ENCODE measurements at regions of chrX and their contacts with region 1.

Region 1: DNA sequence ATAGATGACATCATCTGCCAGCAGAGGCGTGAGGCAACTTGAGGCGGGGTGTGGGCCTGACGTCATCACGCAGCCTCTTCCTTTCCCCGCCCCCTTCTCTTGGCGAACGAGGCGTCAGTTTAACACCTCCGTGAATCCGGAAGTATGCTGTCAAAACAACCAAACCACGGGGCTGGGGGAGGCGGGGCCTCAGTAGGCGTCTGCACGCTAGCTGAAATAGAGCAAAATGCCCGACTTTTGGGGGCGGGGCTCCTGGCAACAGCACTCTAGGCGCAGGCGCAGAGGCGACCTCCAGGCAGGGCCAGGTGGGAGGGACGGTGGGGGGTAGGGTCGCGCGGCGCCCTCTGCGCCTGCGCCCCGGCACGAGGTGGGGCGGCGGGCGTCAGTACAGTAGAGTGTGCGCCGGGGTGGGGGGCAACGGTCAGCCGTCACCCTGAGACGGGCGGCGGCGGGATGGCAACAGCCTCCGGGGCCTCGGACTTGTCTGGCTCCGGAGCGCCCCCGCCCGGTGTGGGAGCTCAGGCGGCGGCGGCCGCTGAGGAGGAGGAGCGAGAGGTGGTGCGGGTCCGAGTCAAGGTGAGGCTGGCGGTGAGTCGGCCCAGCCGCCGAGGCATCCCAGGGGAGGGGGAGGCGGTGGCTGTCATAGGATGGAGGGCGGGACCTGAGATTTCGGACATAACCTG is at the start of gene TBC1D25:
- DNase-seq: peak; percentile 93
- H3K4me3 Mint-ChIP-seq: peak within 1 kb of the TSS; percentile 94
- H3K27ac Mint-ChIP-seq: peak within 1 kb of the TSS; percentile 92
- H3K4me1 Mint-ChIP-seq: peaks cover 17% of the 10 kb centered on the region
- H3K27me3 Mint-ChIP-seq: no peaks in the 10 kb centered on the region
- total RNA-seq, gene TBC1D25: 13.5 and 16.0 TPM in 2 replicates

Region 2: GRCh38 chrX:48574270-48575266 is 35.1 kb after region 1 on chrX and contains the start of gene RBM3:
- intact Hi-C with region 1: loop called (anchors 1 kb)
- DNase-seq: peak; percentile 89
- H3K4me3 Mint-ChIP-seq: peak within 1 kb of the TSS; percentile 99
- H3K27ac Mint-ChIP-seq: peak within 1 kb of the TSS; percentile 100
- H3K4me1 Mint-ChIP-seq: peaks cover 19% of the 10 kb centered on the region
- H3K27me3 Mint-ChIP-seq: no peaks in the 10 kb centered on the region
- total RNA-seq, gene RBM3: 318 and 338 TPM in 2 replicates

Region 3: GRCh38 chrX:48631350-48632090 is 92.0 kb after region 1 on chrX:
- intact Hi-C with region 1: no loop called
- DNase-seq: peak; percentile 69
- H3K4me3 Mint-ChIP-seq: peak overlapping the region; percentile 19
- H3K27ac Mint-ChIP-seq: no peak overlapping the region
- H3K4me1 Mint-ChIP-seq: peaks cover 3% of the 10 kb centered on the region
- H3K27me3 Mint-ChIP-seq: no peaks in the 10 kb centered on the region

Region 4: DNA sequence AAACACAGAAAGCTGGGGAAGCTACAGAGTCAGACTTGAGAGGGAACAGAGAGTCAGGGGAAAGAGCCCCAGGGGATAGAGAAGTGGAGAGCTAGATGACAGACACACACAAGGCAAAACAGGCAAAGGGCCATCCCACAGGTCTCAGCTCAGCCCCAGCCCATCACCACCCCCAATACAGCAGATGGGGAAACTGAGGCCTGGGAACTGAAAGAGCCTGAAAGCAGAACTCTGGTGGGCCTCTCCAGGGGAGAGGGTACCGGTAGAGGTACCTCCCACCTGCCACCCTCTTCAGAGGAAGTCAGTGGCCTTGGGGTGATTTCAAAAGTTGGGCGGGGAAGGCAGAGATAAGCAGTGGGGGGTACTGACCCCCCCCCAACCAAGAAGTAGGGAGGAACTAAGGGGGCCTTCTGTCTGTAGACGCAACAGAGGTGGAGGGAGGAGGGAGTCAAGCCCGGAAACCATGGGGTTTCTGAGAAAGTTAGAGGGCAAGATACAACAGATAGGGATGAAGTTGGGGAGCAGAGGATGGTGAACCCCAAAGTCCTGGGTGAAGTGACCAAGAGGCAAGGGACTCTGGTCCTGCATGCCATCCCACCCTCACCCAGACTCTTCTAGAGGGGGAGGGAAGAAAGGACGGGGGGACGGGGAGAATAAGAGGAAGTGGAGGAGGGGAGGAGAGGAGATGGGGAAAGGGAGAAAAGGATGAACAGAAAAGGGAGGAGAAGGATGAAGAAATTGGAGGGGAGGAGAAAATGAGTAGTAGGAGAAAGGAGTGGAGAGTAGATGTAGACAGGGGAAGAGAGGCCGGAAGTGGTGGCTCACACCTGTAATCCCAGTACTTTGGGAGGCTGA is 250.1 kb after region 1 on chrX:
- intact Hi-C with region 1: no loop called
- DNase-seq: no peak
- H3K4me3 Mint-ChIP-seq: no peak overlapping the region
- H3K27ac Mint-ChIP-seq: no peak overlapping the region
- H3K4me1 Mint-ChIP-seq: no peaks in the 10 kb centered on the region
- H3K27me3 Mint-ChIP-seq: peaks cover 10% of the 10 kb centered on the region